A549 (cell line): ENCODE measurements at regions of chr4 and their contacts with region 1.

Region 1: GRCh38 chr4:88659055-88659889 is 38.4 kb downstream of the NAP1L5 start:
- DNase-seq: peak; percentile 64 to 67
- ATAC-seq: peak; percentile 98 to 100
- H3K4me3 ChIP-seq: no peak overlapping the region
- H3K27ac ChIP-seq: peak overlapping the region; percentile 65 to 76; a peak in 5 of 6 replicates
- H3K4me1 ChIP-seq: peaks cover 35% of the 10 kb centered on the region
- CTCF ChIP-seq: peak; percentile 68
- EP300 ChIP-seq: no peak
- POLR2A ChIP-seq: no peak
- RAD21 ChIP-seq: peak; percentile 86 to 88

Region 2: GRCh38 chr4:88523325-88524129 is 135.7 kb before region 1 on chr4 and contains the start of gene PYURF:
- CTCF ChIA-PET with region 1: interaction called, 41 read pairs
- POLR2A ChIA-PET with region 1: interaction called, 4 read pairs
- DNase-seq: peak; percentile 65 to 90
- ATAC-seq: peak; percentile 96 to 97
- H3K4me3 ChIP-seq: peak within 1 kb of the TSS; percentile 80
- H3K27ac ChIP-seq: peak within 1 kb of the TSS; percentile 90 to 97
- H3K4me1 ChIP-seq: peaks cover 26% of the 10 kb centered on the region; the same call in 2 of the 3 replicates
- CTCF ChIP-seq: no peak
- EP300 ChIP-seq: no peak
- POLR2A ChIP-seq: peak; percentile 91
- RAD21 ChIP-seq: no peak
- polyA plus RNA-seq, gene PYURF: 51.1 and 70.2 TPM in 2 replicates

Region 3: GRCh38 chr4:88533937-88534750 is 125.1 kb before region 1 on chr4:
- CTCF ChIA-PET with region 1: interaction called, 41 read pairs
- POLR2A ChIA-PET with region 1: no interaction called
- DNase-seq: no peak
- ATAC-seq: no peak
- H3K4me3 ChIP-seq: no peak overlapping the region
- H3K27ac ChIP-seq: no peak overlapping the region
- H3K4me1 ChIP-seq: no peaks in the 10 kb centered on the region
- CTCF ChIP-seq: no peak
- EP300 ChIP-seq: no peak
- POLR2A ChIP-seq: no peak
- RAD21 ChIP-seq: no peak

Region 4: GRCh38 chr4:88591787-88592599 is 67.3 kb before region 1 on chr4 and contains the start of gene HERC3:
- CTCF ChIA-PET with region 1: interaction called, 17 read pairs
- POLR2A ChIA-PET with region 1: no interaction called
- DNase-seq: peak; percentile 58 to 80
- ATAC-seq: peak; percentile 97 to 99
- H3K4me3 ChIP-seq: peak within 1 kb of the TSS; percentile 81
- H3K27ac ChIP-seq: peak within 1 kb of the TSS; percentile 72 to 83
- H3K4me1 ChIP-seq: peaks cover 4% of the 10 kb centered on the region; the same call in 1 of the 3 replicates
- CTCF ChIP-seq: no peak
- EP300 ChIP-seq: no peak
- POLR2A ChIP-seq: no peak
- RAD21 ChIP-seq: no peak
- polyA plus RNA-seq, gene HERC3: 4.9 and 6.2 TPM in 2 replicates

Region 5: GRCh38 chr4:88672987-88673386 is 13.7 kb after region 1 on chr4:
- CTCF ChIA-PET with region 1: interaction called, 15 read pairs
- POLR2A ChIA-PET with region 1: no interaction called
- DNase-seq: peak in 1 of 2 experiments; percentile 30
- ATAC-seq: peak in 1 of 2 experiments; percentile 85; a peak in 5 of 6 replicates
- H3K4me3 ChIP-seq: no peak overlapping the region
- H3K27ac ChIP-seq: no peak overlapping the region
- H3K4me1 ChIP-seq: no peaks in the 10 kb centered on the region
- CTCF ChIP-seq: peak; percentile 51
- EP300 ChIP-seq: no peak
- POLR2A ChIP-seq: no peak
- RAD21 ChIP-seq: peak; percentile 30 to 46; a peak in 4 of 5 replicates

Region 6: DNA sequence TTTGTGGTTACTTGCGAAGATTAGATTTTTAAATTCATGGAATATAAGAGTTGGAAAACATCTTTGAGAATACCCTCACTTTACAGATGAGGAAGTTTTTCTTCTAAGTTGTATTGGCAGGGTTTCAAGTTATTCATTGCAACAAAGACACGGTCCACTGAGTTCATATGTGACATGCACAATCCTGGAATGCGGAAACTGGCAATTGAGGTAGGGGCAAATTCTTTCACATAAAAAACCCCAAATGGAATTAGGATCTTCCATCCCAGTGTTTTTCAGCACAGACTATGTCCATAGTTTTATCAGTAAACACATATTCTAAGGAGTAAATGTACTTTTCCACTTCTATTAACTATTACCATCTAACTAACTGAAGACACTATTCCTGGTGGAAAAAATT is 120.2 kb after region 1 on chr4:
- CTCF ChIA-PET with region 1: no interaction called
- POLR2A ChIA-PET with region 1: no interaction called
- DNase-seq: no peak
- ATAC-seq: no peak
- H3K4me3 ChIP-seq: no peak overlapping the region
- H3K27ac ChIP-seq: no peak overlapping the region
- H3K4me1 ChIP-seq: peaks cover 7% of the 10 kb centered on the region; the same call in 2 of the 3 replicates
- CTCF ChIP-seq: no peak
- EP300 ChIP-seq: no peak
- POLR2A ChIP-seq: no peak
- RAD21 ChIP-seq: no peak

Region 7: GRCh38 chr4:88828842-88829571 is 169.7 kb after region 1 on chr4:
- CTCF ChIA-PET with region 1: no interaction called
- POLR2A ChIA-PET with region 1: no interaction called
- DNase-seq: no peak
- ATAC-seq: no peak
- H3K4me3 ChIP-seq: no peak overlapping the region
- H3K27ac ChIP-seq: no peak overlapping the region
- H3K4me1 ChIP-seq: peaks cover 3% of the 10 kb centered on the region; the same call in 2 of the 3 replicates
- CTCF ChIP-seq: no peak
- EP300 ChIP-seq: no peak
- POLR2A ChIP-seq: no peak
- RAD21 ChIP-seq: no peak